Dendritic cell treated with granulocyte-macrophage colony-stimulating factor and Interleukin-4, amounts not matched to agents 40 ng/mL and 50 ng/mL, for 4 days (primary cell): ENCODE measurements at regions of chr7 and their contacts with region 1.

Region 1: GRCh38 chr7:140238778-140239652 is 62.2 kb upstream of the KDM7A start:
- H3K4me3 Mint-ChIP-seq: no peak overlapping the region
- H3K27ac Mint-ChIP-seq: peak overlapping the region; percentile 97
- H3K4me1 Mint-ChIP-seq: peaks cover 67% of the 10 kb centered on the region
- H3K27me3 Mint-ChIP-seq: no peaks in the 10 kb centered on the region

Region 2: GRCh38 chr7:139387594-139387993 is 851.4 kb before region 1 on chr7:
- intact Hi-C with region 1: no loop called
- H3K4me3 Mint-ChIP-seq: no peak overlapping the region
- H3K27ac Mint-ChIP-seq: peak overlapping the region; percentile 67
- H3K4me1 Mint-ChIP-seq: peaks cover 21% of the 10 kb centered on the region
- H3K27me3 Mint-ChIP-seq: no peaks in the 10 kb centered on the region

Region 3: DNA sequence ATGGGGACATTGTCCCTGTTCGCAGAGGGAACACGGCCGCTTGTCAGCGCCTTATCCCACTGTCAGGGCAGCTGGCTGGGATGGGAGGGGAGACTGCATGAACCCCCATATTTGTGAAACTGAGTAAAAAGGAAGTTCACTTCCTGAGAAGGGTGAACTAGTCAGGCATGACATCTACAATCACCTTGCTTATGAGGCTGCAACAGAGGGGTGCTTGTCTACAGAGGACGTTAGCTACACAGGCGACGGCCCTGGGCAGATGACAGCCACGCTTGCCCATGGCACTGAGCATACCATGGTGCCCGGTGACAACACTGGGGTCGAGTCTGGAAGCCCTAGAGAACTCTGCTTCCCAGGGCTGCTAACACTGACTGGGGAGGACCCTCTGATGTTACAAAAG is 16.2 kb before region 1 on chr7:
- intact Hi-C with region 1: no loop called
- H3K4me3 Mint-ChIP-seq: no peak overlapping the region
- H3K27ac Mint-ChIP-seq: peak overlapping the region; percentile 70
- H3K4me1 Mint-ChIP-seq: peaks cover 30% of the 10 kb centered on the region
- H3K27me3 Mint-ChIP-seq: peaks cover 14% of the 10 kb centered on the region

Region 4: GRCh38 chr7:140275069-140275965 is 36.3 kb after region 1 on chr7:
- intact Hi-C with region 1: loop called (anchors 1 kb)
- H3K4me3 Mint-ChIP-seq: no peak overlapping the region
- H3K27ac Mint-ChIP-seq: no peak overlapping the region
- H3K4me1 Mint-ChIP-seq: peaks cover 17% of the 10 kb centered on the region
- H3K27me3 Mint-ChIP-seq: peaks cover 12% of the 10 kb centered on the region

Region 5: DNA sequence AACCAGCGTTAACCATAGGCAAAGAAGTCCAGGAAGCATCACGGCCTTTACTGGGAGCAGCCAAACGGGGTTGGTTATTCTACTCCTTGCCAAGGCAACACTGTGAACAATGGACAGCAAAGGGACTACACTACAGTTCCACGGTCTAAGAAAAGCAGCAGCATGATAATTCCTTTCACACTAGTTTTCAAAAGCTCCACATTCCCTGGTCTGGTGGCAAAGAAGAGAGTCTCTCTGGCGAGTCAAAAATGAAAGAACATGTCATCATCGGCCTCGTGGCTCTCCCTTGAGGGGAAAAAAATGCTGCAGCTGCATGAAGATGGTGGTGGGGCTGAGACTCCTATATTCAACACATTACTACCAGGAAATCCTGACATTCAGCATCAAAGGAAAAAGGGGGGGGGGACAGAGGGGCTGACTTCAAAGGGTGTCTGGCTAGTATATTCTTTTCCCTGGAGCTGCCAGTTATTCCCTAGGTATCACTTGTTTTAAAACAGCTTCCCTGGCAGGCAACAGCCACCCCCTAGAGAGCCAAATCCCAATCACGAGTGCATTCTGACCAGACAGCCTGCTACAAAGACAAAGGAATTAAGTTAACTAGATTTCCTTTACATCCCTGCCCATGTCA is 110.2 kb after region 1 on chr7:
- intact Hi-C with region 1: no loop called
- H3K4me3 Mint-ChIP-seq: no peak overlapping the region
- H3K27ac Mint-ChIP-seq: no peak overlapping the region
- H3K4me1 Mint-ChIP-seq: no peaks in the 10 kb centered on the region
- H3K27me3 Mint-ChIP-seq: no peaks in the 10 kb centered on the region